CD8-positive, alpha-beta T cell (primary cell): ENCODE measurements at regions of chr2 and their contacts with region 1.

Region 1: GRCh38 chr2:136281281-136282114 is 163.5 kb upstream of the CXCR4 start:
- DNase-seq: peak; percentile 22 to 94 (median 63)
- ATAC-seq: peak; percentile 83
- H3K4me3 ChIP-seq: no peak overlapping the region
- H3K4me3 Mint-ChIP-seq: peak overlapping the region; percentile 33
- H3K27ac ChIP-seq: peak overlapping the region; percentile 48 to 80
- H3K27ac Mint-ChIP-seq: peak overlapping the region; percentile 96
- H3K4me1 ChIP-seq: peaks cover 31% of the 10 kb centered on the region
- H3K4me1 Mint-ChIP-seq: peaks cover 40% of the 10 kb centered on the region
- H3K27me3 ChIP-seq: no peaks in the 10 kb centered on the region
- H3K27me3 Mint-ChIP-seq: no peaks in the 10 kb centered on the region
- CTCF ChIP-seq: no peak

Region 2: GRCh38 chr2:135974036-135974435 is 307.5 kb before region 1 on chr2:
- CTCF ChIA-PET with region 1: no interaction called
- POLR2A ChIA-PET with region 1: no interaction called
- intact Hi-C with region 1: no loop called
- DNase-seq: no peak
- ATAC-seq: no peak
- H3K4me3 ChIP-seq: no peak overlapping the region
- H3K4me3 Mint-ChIP-seq: no peak overlapping the region
- H3K27ac ChIP-seq: no peak overlapping the region
- H3K27ac Mint-ChIP-seq: no peak overlapping the region
- H3K4me1 ChIP-seq: no peaks in the 10 kb centered on the region
- H3K4me1 Mint-ChIP-seq: peaks cover 64% of the 10 kb centered on the region
- H3K27me3 ChIP-seq: no peaks in the 10 kb centered on the region
- H3K27me3 Mint-ChIP-seq: no peaks in the 10 kb centered on the region
- CTCF ChIP-seq: no peak

Region 3: DNA sequence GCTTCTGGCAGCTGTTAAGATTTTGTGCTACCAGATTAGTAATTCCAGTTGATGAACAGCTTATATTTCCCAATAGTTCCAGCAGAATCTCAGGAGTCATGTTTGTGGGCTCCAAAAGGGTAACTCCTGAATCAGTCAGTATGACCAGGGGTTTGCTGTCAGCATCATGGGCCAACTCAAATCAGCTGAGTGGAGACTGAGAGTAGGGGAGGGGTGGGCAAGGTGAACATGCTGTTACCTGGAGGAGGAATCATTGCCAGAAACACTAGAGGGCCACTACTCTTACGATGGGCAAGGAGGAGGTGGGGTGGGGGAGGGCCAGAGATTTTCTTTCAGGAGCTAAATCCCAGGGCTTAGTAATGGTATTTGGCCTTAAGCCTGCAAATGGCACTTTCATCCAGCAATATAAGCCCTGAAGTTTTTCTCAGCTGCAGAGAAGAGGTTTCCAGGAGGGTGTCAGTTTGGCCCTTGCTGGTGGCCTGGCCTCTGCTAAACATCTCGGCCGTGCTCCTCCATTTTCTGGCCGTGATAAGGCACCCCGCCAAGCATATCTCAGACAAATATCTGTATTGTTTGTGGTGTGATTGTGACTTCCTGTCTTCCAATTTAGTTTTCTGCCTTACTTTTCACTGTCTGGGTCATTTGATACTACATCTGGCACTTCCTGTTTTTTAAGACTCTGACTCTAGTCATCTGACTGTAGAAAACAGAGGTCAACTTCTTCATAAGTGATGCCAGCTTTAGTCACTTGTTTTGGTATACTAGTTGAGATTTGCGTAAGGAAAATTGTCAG is 43.0 kb before region 1 on chr2:
- CTCF ChIA-PET with region 1: no interaction called
- POLR2A ChIA-PET with region 1: interaction called, 3 read pairs
- intact Hi-C with region 1: loop called in 1 of 2 experiments (anchors 5 kb)
- DNase-seq: peak; percentile 29 to 89 (median 65)
- ATAC-seq: peak; percentile 75
- H3K4me3 ChIP-seq: peak overlapping the region in 1 of 2 experiments; percentile 13
- H3K4me3 Mint-ChIP-seq: peak overlapping the region; percentile 30
- H3K27ac ChIP-seq: peak overlapping the region; percentile 64 to 83
- H3K27ac Mint-ChIP-seq: peak overlapping the region; percentile 91
- H3K4me1 ChIP-seq: peaks cover 31% of the 10 kb centered on the region
- H3K4me1 Mint-ChIP-seq: peaks cover 56% of the 10 kb centered on the region
- H3K27me3 ChIP-seq: no peaks in the 10 kb centered on the region
- H3K27me3 Mint-ChIP-seq: no peaks in the 10 kb centered on the region
- CTCF ChIP-seq: no peak

Region 4: GRCh38 chr2:136305517-136306192 is 24.2 kb after region 1 on chr2:
- CTCF ChIA-PET with region 1: no interaction called
- POLR2A ChIA-PET with region 1: no interaction called
- intact Hi-C with region 1: loop called in 1 of 2 experiments (anchors 2 kb)
- DNase-seq: peak; percentile 6 to 86 (median 54)
- ATAC-seq: peak; percentile 99
- H3K4me3 ChIP-seq: no peak overlapping the region
- H3K4me3 Mint-ChIP-seq: no peak overlapping the region
- H3K27ac ChIP-seq: no peak overlapping the region
- H3K27ac Mint-ChIP-seq: peak overlapping the region; percentile 78
- H3K4me1 ChIP-seq: peaks cover 6% of the 10 kb centered on the region
- H3K4me1 Mint-ChIP-seq: peaks cover 16% of the 10 kb centered on the region
- H3K27me3 ChIP-seq: no peaks in the 10 kb centered on the region
- H3K27me3 Mint-ChIP-seq: no peaks in the 10 kb centered on the region
- CTCF ChIP-seq: no peak